ENCODE measurements at regions of chr1 and their contacts with region 1.

Region 1: GRCh38 chr1:242017584-242018233 is 18.8 kb upstream of the MAP1LC3C start:
- DNase-seq: no peak
- ATAC-seq: peak; percentile 77
- H3K4me3 Mint-ChIP-seq: no peak overlapping the region
- H3K27ac Mint-ChIP-seq: no peak overlapping the region
- H3K4me1 Mint-ChIP-seq: no peaks in the 10 kb centered on the region
- H3K27me3 Mint-ChIP-seq: no peaks in the 10 kb centered on the region
- CTCF ChIP-seq: no peak

Region 2: DNA sequence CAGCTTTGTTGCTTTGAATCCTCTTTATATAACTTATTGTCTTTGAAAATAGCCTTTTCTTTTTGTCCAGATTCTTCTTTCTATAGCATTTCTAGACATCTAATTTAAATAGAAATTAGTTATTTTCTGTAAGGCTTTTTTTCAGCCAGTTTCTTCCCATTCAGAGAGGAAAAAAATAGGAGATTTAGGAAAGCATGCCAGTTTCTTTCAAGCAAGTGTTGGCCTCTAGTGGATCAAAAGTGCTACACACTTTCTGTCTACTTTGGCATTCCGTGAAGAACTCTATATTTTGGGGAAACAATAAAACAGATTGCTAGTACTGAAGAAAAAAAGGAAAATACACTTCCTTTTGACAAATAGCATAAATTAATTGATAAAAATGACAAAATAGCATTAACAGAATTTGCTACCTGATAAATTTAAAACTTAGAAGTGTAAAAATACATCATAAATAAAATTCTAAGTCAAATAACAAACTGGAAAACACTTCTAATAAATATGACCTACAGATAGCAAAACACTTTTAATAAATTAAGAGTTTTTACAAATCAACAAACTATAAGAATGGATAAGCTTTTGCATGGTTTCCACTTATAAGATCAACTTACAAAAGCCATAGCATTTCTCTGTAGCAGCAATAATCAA is 182.9 kb before region 1 on chr1:
- CTCF ChIA-PET with region 1: no interaction called
- POLR2A ChIA-PET with region 1: no interaction called
- intact Hi-C with region 1: loop called (anchors 10 kb)
- DNase-seq: no peak
- ATAC-seq: no peak
- H3K4me3 Mint-ChIP-seq: no peak overlapping the region
- H3K27ac Mint-ChIP-seq: no peak overlapping the region
- H3K4me1 Mint-ChIP-seq: peaks cover 10% of the 10 kb centered on the region
- H3K27me3 Mint-ChIP-seq: no peaks in the 10 kb centered on the region
- CTCF ChIP-seq: no peak

Region 3: GRCh38 chr1:241895013-241895412 is 122.7 kb before region 1 on chr1:
- CTCF ChIA-PET with region 1: interaction called, 4 read pairs
- POLR2A ChIA-PET with region 1: no interaction called
- intact Hi-C with region 1: loop called (anchors 1 kb)
- DNase-seq: no peak
- ATAC-seq: no peak
- H3K4me3 Mint-ChIP-seq: no peak overlapping the region
- H3K27ac Mint-ChIP-seq: no peak overlapping the region
- H3K4me1 Mint-ChIP-seq: peaks cover 15% of the 10 kb centered on the region
- H3K27me3 Mint-ChIP-seq: no peaks in the 10 kb centered on the region
- CTCF ChIP-seq: no peak

Region 4: DNA sequence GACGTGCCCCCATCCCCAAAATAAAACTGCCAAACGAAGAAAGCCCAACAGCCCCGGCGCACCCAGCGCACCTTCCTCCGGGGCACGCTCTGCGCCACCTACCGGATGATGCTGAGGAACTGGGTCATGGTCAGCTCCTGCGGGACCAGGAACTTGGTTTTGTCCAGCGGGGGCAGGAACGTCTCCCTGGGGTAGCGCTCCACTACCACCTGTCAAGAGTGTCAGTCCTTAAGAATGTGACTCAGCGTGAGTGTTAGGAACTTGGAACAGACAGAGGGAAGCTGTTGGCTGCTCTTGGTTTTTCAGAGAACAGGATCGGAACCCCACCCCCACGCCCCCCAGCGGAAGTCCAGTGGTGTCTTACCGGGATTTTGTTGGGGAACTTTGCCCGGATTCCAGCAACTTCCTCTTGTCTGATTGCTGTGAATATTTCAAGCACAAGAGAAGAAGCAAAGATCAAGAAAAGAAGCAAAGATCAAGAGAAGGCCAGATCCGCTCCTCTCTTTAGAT is 19.2 kb before region 1 on chr1:
- CTCF ChIA-PET with region 1: no interaction called
- POLR2A ChIA-PET with region 1: no interaction called
- intact Hi-C with region 1: no loop called
- DNase-seq: peak; percentile 52
- ATAC-seq: peak; percentile 88
- H3K4me3 Mint-ChIP-seq: peak overlapping the region; percentile 80
- H3K27ac Mint-ChIP-seq: no peak overlapping the region
- H3K4me1 Mint-ChIP-seq: peaks cover 5% of the 10 kb centered on the region
- H3K27me3 Mint-ChIP-seq: peaks cover 5% of the 10 kb centered on the region
- CTCF ChIP-seq: no peak

Region 5: GRCh38 chr1:244021947-244022700 is 2004.4 kb after region 1 on chr1:
- CTCF ChIA-PET with region 1: no interaction called
- POLR2A ChIA-PET with region 1: no interaction called
- intact Hi-C with region 1: no loop called
- DNase-seq: no peak
- ATAC-seq: no peak
- H3K4me3 Mint-ChIP-seq: no peak overlapping the region
- H3K27ac Mint-ChIP-seq: no peak overlapping the region
- H3K4me1 Mint-ChIP-seq: no peaks in the 10 kb centered on the region
- H3K27me3 Mint-ChIP-seq: peaks cover 5% of the 10 kb centered on the region
- CTCF ChIP-seq: no peak

Measured in activated B cell treated with CpG ODN at 0.5 μM for 24 hours (primary cell).